ENCODE measurements at regions of chr2 and their contacts with region 1.

Region 1: GRCh38 chr2:168890006-168890782 is at the start of gene SPC25:
- DNase-seq: peak; percentile 88
- H3K4me3 Mint-ChIP-seq: peak within 1 kb of the TSS; percentile 96
- H3K27ac Mint-ChIP-seq: peak within 1 kb of the TSS; percentile 89
- H3K4me1 Mint-ChIP-seq: peaks cover 23% of the 10 kb centered on the region
- H3K27me3 Mint-ChIP-seq: peaks cover 30% of the 10 kb centered on the region
- total RNA-seq, gene SPC25: 18.4 and 18.5 TPM in 2 replicates

Region 2: GRCh38 chr2:168901003-168901402 is 10.8 kb after region 1 on chr2 and contains the start of gene G6PC2:
- intact Hi-C with region 1: no loop called
- DNase-seq: no peak
- H3K4me3 Mint-ChIP-seq: no peak within 1 kb of the TSS
- H3K27ac Mint-ChIP-seq: no peak within 1 kb of the TSS
- H3K4me1 Mint-ChIP-seq: no peaks in the 10 kb centered on the region
- H3K27me3 Mint-ChIP-seq: peaks cover 52% of the 10 kb centered on the region
- total RNA-seq, gene G6PC2: not detected in 2 replicates

Region 3: GRCh38 chr2:168912901-168913369 is 22.7 kb after region 1 on chr2:
- intact Hi-C with region 1: loop called (anchors 2 kb)
- DNase-seq: no peak
- H3K4me3 Mint-ChIP-seq: peak overlapping the region; percentile 45
- H3K27ac Mint-ChIP-seq: no peak overlapping the region
- H3K4me1 Mint-ChIP-seq: peaks cover 16% of the 10 kb centered on the region
- H3K27me3 Mint-ChIP-seq: peaks cover 50% of the 10 kb centered on the region

Measured in activated T-helper 2 cell treated with anti-CD3 and anti-CD28 coated beads, Interferon-gamma antibody, Interleukin-2, Interleukin-4, amounts not matched to agents 10 μg/mL and 5 μg/mL and 100 μg/mL, durations not matched to agents 14 hours and 24 hours and 36 hours (primary cell).